ENCODE measurements at regions of chr7 and their contacts with region 1.

Region 1: DNA sequence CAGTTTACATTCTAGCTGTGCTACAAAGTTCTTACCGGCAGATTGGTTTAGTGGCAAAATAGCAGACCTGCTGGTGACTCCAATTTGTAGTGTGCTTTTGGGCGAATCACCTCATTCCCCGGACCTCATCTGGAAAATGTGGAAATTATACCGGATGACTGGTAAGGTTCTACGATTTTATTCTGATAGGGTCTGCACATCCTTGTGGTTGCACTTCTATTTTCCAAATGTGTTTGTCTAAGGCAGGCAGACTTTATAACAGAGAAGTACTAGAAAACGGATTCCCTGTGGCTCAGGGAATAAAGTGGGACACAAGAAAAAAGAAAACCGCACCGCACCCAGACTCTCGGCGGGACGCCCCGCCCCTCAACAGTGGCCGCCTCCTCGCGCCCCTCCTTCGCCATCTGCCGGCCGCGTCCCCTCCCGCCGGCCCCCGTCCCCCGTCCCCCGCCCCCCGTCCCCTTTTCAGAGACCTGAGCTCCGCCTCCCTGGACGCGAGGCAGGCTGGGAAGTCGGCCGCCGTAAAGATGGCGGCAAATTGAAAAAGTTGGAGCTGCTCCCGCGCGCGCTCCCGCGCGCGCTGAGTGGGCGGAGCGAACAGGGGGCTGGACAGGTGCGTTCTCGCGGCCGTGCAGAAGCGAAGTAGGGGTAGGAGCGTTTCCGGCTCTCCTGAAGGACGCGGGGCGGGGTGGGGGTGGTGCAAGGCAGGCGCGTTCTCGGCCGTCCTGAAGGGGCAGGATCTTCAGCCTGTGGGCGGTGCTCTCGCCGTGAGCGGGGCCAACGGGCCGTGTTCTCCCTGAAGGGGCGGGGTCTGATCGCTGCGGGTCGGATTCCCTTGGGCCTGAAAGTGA is 531 bp upstream of the CCM2 start:
- DNase-seq: peak; percentile 100
- ATAC-seq: peak; percentile 84
- H3K4me3 ChIP-seq: peak overlapping the region; percentile 40 to 99 (median 76)
- H3K4me3 Mint-ChIP-seq: peak overlapping the region; percentile 99
- H3K27ac ChIP-seq: peak overlapping the region; percentile 65 to 72
- H3K27ac Mint-ChIP-seq: peak overlapping the region; percentile 98
- H3K4me1 ChIP-seq: peaks cover 36 to 50% of the 10 kb centered on the region in 2 donors
- H3K4me1 Mint-ChIP-seq: peaks cover 57% of the 10 kb centered on the region
- H3K27me3 ChIP-seq: no peaks in the 10 kb centered on the region
- H3K27me3 Mint-ChIP-seq: no peaks in the 10 kb centered on the region
- CTCF ChIP-seq: no peak

Region 2: DNA sequence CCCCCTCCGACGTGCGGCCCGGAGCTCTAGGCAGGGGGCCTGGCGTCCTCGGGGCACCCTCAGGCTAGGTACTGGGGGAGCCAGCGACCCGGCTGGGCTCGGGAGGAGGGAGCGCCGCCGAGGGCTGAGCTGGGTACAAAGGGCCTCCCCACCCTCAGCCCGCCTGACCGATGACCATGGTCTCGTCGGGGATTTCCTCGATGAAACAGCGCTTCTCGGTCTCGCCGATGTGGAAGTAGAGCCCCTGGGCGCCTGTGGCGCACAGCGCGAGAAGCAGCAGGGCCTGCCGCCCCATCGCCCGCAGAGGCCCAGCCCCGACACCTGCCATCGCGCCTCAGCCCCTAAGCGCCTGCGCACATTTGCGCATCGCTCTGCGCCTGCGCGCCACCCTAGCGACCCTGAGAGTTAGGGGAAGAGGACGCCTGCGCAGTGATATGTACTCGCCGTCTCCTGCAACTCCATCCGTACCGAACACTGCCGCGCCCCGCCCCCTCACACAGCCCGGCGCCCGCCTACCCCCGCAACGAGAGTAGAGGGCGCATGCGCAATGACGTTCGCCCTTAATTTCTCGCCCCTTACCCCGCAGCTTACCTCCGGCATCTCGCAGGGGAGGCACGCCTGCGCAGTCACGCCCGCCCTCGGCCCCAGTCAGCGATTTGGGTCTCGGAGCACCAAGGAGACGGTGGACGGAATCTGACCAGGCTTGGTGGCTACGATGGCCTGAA is 417.4 kb before region 1 on chr7 and contains the start of gene TMED4:
- CTCF ChIA-PET with region 1: no interaction called
- POLR2A ChIA-PET with region 1: interaction called, 3 read pairs
- intact Hi-C with region 1: loop called (anchors 5 kb)
- DNase-seq: peak; percentile 100
- ATAC-seq: peak; percentile 92
- H3K4me3 ChIP-seq: peak within 1 kb of the TSS; percentile 72 to 99 (median 88)
- H3K4me3 Mint-ChIP-seq: peak within 1 kb of the TSS; percentile 96
- H3K27ac ChIP-seq: peak within 1 kb of the TSS; percentile 92 to 97
- H3K27ac Mint-ChIP-seq: peak within 1 kb of the TSS; percentile 99
- H3K4me1 ChIP-seq: peaks cover 21% of the 10 kb centered on the region in 2 donors
- H3K4me1 Mint-ChIP-seq: peaks cover 28% of the 10 kb centered on the region
- H3K27me3 ChIP-seq: no peaks in the 10 kb centered on the region
- H3K27me3 Mint-ChIP-seq: no peaks in the 10 kb centered on the region
- CTCF ChIP-seq: no peak
- total RNA-seq, gene TMED4: 84.0 and 84.1 TPM in 2 replicates

Region 3: GRCh38 chr7:44980393-44981034 is 19.0 kb before region 1 on chr7:
- CTCF ChIA-PET with region 1: interaction called, 6 read pairs
- POLR2A ChIA-PET with region 1: interaction called, 20 read pairs
- intact Hi-C with region 1: loop called (anchors 1 kb)
- DNase-seq: peak; percentile 88
- ATAC-seq: peak; percentile 46
- H3K4me3 ChIP-seq: peak overlapping the region in 2 of 5 experiments; percentile 1 to 90
- H3K4me3 Mint-ChIP-seq: peak overlapping the region; percentile 97
- H3K27ac ChIP-seq: peak overlapping the region; percentile 79 to 93
- H3K27ac Mint-ChIP-seq: peak overlapping the region; percentile 98
- H3K4me1 ChIP-seq: peaks cover 53 to 75% of the 10 kb centered on the region in 2 donors
- H3K4me1 Mint-ChIP-seq: peaks cover 86% of the 10 kb centered on the region
- H3K27me3 ChIP-seq: no peaks in the 10 kb centered on the region
- H3K27me3 Mint-ChIP-seq: no peaks in the 10 kb centered on the region
- CTCF ChIP-seq: no peak

Region 4: DNA sequence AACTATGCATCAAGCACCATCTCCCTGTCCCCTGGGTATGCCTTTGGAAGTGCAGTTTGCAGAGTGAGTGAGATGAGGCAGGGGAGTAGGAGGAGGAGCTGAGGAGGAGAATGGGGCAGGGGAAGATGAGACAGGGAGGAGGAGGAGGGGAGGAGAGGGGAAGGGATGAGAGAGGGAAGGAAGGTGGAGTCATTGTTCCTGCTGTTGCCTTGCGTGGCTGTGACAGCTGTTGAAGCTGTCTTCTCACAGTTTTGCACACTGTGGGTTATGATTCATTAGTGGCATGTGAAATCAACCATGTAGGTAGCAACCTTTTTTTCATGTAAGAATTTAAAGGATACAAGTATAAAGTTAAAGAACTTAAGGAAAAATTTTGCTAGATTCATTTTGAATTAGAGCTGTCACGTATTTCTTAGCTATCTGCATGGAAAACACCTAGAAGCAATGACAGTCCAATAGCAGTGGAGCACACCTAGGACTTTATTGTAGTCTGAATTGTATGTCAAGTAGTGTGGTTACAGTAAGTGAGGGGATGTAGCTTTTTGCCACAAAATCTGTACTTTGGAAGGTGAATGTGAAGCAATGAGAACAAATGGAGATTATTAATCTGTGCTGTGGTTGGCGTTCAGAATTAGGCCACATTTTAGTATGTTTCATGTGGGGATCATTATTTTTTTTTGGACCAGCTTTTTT is 22.3 kb after region 1 on chr7:
- CTCF ChIA-PET with region 1: interaction called, 40 read pairs
- POLR2A ChIA-PET with region 1: interaction called, 77 read pairs
- intact Hi-C with region 1: no loop called
- DNase-seq: no peak
- ATAC-seq: peak; percentile 74
- H3K4me3 ChIP-seq: no peak overlapping the region
- H3K4me3 Mint-ChIP-seq: peak overlapping the region; percentile 24
- H3K27ac ChIP-seq: peak overlapping the region in 1 of 2 donors; percentile 62
- H3K27ac Mint-ChIP-seq: peak overlapping the region; percentile 78
- H3K4me1 ChIP-seq: peaks cover 23 to 28% of the 10 kb centered on the region in 2 donors
- H3K4me1 Mint-ChIP-seq: peaks cover 44% of the 10 kb centered on the region
- H3K27me3 ChIP-seq: no peaks in the 10 kb centered on the region
- H3K27me3 Mint-ChIP-seq: no peaks in the 10 kb centered on the region
- CTCF ChIP-seq: no peak

Region 5: GRCh38 chr7:45111298-45112223 is 112.1 kb after region 1 on chr7 and contains the start of gene TBRG4:
- CTCF ChIA-PET with region 1: interaction called, 4 read pairs
- POLR2A ChIA-PET with region 1: interaction called, 6 read pairs
- intact Hi-C with region 1: loop called (anchors 1 kb)
- DNase-seq: peak; percentile 96
- ATAC-seq: peak; percentile 94
- H3K4me3 ChIP-seq: peak within 1 kb of the TSS; percentile 67 to 93 (median 72)
- H3K4me3 Mint-ChIP-seq: peak within 1 kb of the TSS; percentile 91
- H3K27ac ChIP-seq: peak within 1 kb of the TSS; percentile 91 to 98
- H3K27ac Mint-ChIP-seq: peak within 1 kb of the TSS; percentile 95
- H3K4me1 ChIP-seq: peaks cover 22 to 38% of the 10 kb centered on the region in 2 donors
- H3K4me1 Mint-ChIP-seq: peaks cover 40% of the 10 kb centered on the region
- H3K27me3 ChIP-seq: no peaks in the 10 kb centered on the region
- H3K27me3 Mint-ChIP-seq: no peaks in the 10 kb centered on the region
- CTCF ChIP-seq: no peak
- total RNA-seq, gene TBRG4: 111 and 116 TPM in 2 replicates

Measured in B cell (primary cell).